ENCODE measurements at regions of chr2 and their contacts with region 1.

Region 1: GRCh38 chr2:84495539-84496146 is 20.7 kb upstream of the DNAH6 start:
- DNase-seq: peak in 7 of 9 donors; percentile 61 to 81 (median 73)
- ATAC-seq: peak; percentile 96
- H3K4me3 ChIP-seq: no peak overlapping the region
- H3K4me3 Mint-ChIP-seq: peak overlapping the region in 1 of 10 donors; percentile 23
- H3K27ac ChIP-seq: no peak overlapping the region
- H3K27ac Mint-ChIP-seq: peak overlapping the region in 7 of 9 donors; percentile 35 to 82 (median 76)
- H3K4me1 ChIP-seq: peaks cover 0 to 5% of the 10 kb centered on the region in 2 donors
- H3K4me1 Mint-ChIP-seq: peaks cover 9 to 31% (median 28%) of the 10 kb centered on the region in 7 donors
- H3K27me3 ChIP-seq: no peaks in the 10 kb centered on the region
- H3K27me3 Mint-ChIP-seq: peaks cover 0 to 14% (median 0%) of the 10 kb centered on the region in 5 donors

Region 2: GRCh38 chr2:84526562-84526961 is 30.9 kb after region 1 on chr2:
- CTCF ChIA-PET with region 1: interaction called, 3 read pairs
- POLR2A ChIA-PET with region 1: interaction called, 4 read pairs
- intact Hi-C with region 1: loop called in 1 of 2 experiments (anchors 1 kb)
- DNase-seq: peak in 3 of 9 donors; percentile 32 to 45 (median 35)
- ATAC-seq: no peak
- H3K4me3 ChIP-seq: no peak overlapping the region
- H3K4me3 Mint-ChIP-seq: peak overlapping the region in 6 of 10 donors; percentile 17 to 46 (median 30)
- H3K27ac ChIP-seq: no peak overlapping the region
- H3K27ac Mint-ChIP-seq: peak overlapping the region in 8 of 9 donors; percentile 0 to 82 (median 53)
- H3K4me1 ChIP-seq: peaks cover 0 to 9% of the 10 kb centered on the region in 2 donors
- H3K4me1 Mint-ChIP-seq: peaks cover 2 to 36% (median 28%) of the 10 kb centered on the region in 7 donors
- H3K27me3 ChIP-seq: no peaks in the 10 kb centered on the region
- H3K27me3 Mint-ChIP-seq: peaks cover 0 to 16% (median 0%) of the 10 kb centered on the region in 5 donors

Region 3: DNA sequence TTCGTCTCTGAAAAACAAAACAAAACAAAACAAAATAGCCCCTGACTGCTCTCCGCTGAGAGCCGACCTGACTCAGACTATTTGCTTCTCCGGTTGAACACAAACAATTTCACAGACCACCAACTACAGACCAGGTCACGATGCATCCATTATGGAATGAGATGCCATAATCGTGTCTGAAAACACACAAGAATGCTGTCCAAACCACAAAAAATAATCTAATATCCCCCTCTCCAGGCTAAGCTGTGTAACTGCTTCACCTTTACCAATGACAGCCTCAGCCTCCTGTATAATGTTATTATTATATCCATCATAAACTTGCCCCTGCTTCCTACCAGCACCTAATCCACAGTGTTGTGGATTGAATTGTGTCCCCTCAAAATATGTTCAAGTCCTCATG is 135.4 kb after region 1 on chr2:
- CTCF ChIA-PET with region 1: interaction called, 3 read pairs
- POLR2A ChIA-PET with region 1: no interaction called
- intact Hi-C with region 1: loop called (anchors 1 kb)
- DNase-seq: peak in 6 of 9 donors; percentile 21 to 57 (median 50)
- ATAC-seq: peak; percentile 69
- H3K4me3 ChIP-seq: no peak overlapping the region
- H3K4me3 Mint-ChIP-seq: peak overlapping the region in 4 of 10 donors; percentile 5 to 60 (median 34)
- H3K27ac ChIP-seq: no peak overlapping the region
- H3K27ac Mint-ChIP-seq: peak overlapping the region in 5 of 9 donors; percentile 12 to 80 (median 33)
- H3K4me1 ChIP-seq: peaks cover 0 to 15% of the 10 kb centered on the region in 2 donors
- H3K4me1 Mint-ChIP-seq: peaks cover 16 to 56% (median 52%) of the 10 kb centered on the region in 7 donors
- H3K27me3 ChIP-seq: no peaks in the 10 kb centered on the region
- H3K27me3 Mint-ChIP-seq: peaks cover 0 to 2% (median 0%) of the 10 kb centered on the region in 5 donors

Region 4: GRCh38 chr2:84741296-84741765 is 245.7 kb after region 1 on chr2:
- CTCF ChIA-PET with region 1: no interaction called
- POLR2A ChIA-PET with region 1: no interaction called
- intact Hi-C with region 1: loop called in 1 of 2 experiments (anchors 2 kb)
- DNase-seq: peak in 8 of 9 donors; percentile 14 to 43 (median 28)
- ATAC-seq: peak; percentile 94
- H3K4me3 ChIP-seq: no peak overlapping the region
- H3K4me3 Mint-ChIP-seq: peak overlapping the region in 4 of 10 donors; percentile 5 to 30 (median 23)
- H3K27ac ChIP-seq: no peak overlapping the region
- H3K27ac Mint-ChIP-seq: peak overlapping the region in 6 of 9 donors; percentile 7 to 71 (median 38)
- H3K4me1 ChIP-seq: peaks cover 14 to 17% of the 10 kb centered on the region in 2 donors
- H3K4me1 Mint-ChIP-seq: peaks cover 12 to 75% (median 51%) of the 10 kb centered on the region in 7 donors
- H3K27me3 ChIP-seq: no peaks in the 10 kb centered on the region
- H3K27me3 Mint-ChIP-seq: peaks cover 0 to 21% (median 0%) of the 10 kb centered on the region in 5 donors

Region 5: DNA sequence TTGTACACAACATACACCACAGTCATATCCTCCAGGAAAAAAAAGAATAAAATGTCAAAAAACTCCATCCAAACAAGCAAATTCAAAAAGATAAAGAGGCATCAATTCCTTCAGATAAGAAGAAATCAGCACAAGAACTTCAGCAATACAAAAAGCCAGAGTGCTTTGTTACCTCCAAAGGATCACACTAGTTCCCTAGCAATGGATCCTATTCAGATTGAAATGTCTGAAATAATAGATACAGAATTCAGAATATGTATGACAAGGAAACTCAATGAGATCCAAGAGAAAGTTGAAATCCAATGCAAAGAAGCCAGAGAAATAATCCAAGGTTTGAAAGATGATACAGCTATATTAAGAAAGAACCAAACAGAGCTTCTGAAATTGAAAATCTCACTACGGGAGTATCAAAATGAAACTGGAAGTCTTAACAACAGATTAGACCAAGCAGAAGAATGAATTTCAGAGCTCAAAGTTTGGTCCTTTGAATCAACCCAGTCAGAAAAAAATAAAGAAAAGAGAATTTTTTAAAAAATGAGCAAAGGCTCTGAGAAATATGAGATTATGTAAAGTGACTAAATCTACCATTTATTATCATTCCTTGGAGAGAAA is 304.7 kb after region 1 on chr2:
- CTCF ChIA-PET with region 1: no interaction called
- POLR2A ChIA-PET with region 1: no interaction called
- intact Hi-C with region 1: no loop called
- DNase-seq: no peak
- ATAC-seq: no peak
- H3K4me3 ChIP-seq: peak overlapping the region; percentile 25
- H3K4me3 Mint-ChIP-seq: peak overlapping the region in 9 of 10 donors; percentile 42 to 79 (median 62)
- H3K27ac ChIP-seq: no peak overlapping the region
- H3K27ac Mint-ChIP-seq: peak overlapping the region; percentile 3 to 83 (median 65)
- H3K4me1 ChIP-seq: peaks cover 6 to 12% of the 10 kb centered on the region in 2 donors
- H3K4me1 Mint-ChIP-seq: peaks cover 13 to 60% (median 43%) of the 10 kb centered on the region in 7 donors
- H3K27me3 ChIP-seq: no peaks in the 10 kb centered on the region
- H3K27me3 Mint-ChIP-seq: no peaks in the 10 kb centered on the region

Region 6: GRCh38 chr2:84856787-84857186 is 361.1 kb after region 1 on chr2:
- CTCF ChIA-PET with region 1: interaction called, 5 read pairs
- POLR2A ChIA-PET with region 1: interaction called, 3 read pairs
- intact Hi-C with region 1: loop called in 1 of 2 experiments (anchors 2 kb)
- DNase-seq: peak in 2 of 9 donors; percentile 31 to 49
- ATAC-seq: peak; percentile 73
- H3K4me3 ChIP-seq: no peak overlapping the region
- H3K4me3 Mint-ChIP-seq: peak overlapping the region; percentile 54 to 89 (median 85)
- H3K27ac ChIP-seq: peak overlapping the region; percentile 72
- H3K27ac Mint-ChIP-seq: peak overlapping the region; percentile 85 to 99 (median 96)
- H3K4me1 ChIP-seq: peaks cover 53 to 95% of the 10 kb centered on the region in 2 donors
- H3K4me1 Mint-ChIP-seq: peaks cover 72 to 98% (median 96%) of the 10 kb centered on the region in 7 donors
- H3K27me3 ChIP-seq: no peaks in the 10 kb centered on the region
- H3K27me3 Mint-ChIP-seq: no peaks in the 10 kb centered on the region

Region 7: DNA sequence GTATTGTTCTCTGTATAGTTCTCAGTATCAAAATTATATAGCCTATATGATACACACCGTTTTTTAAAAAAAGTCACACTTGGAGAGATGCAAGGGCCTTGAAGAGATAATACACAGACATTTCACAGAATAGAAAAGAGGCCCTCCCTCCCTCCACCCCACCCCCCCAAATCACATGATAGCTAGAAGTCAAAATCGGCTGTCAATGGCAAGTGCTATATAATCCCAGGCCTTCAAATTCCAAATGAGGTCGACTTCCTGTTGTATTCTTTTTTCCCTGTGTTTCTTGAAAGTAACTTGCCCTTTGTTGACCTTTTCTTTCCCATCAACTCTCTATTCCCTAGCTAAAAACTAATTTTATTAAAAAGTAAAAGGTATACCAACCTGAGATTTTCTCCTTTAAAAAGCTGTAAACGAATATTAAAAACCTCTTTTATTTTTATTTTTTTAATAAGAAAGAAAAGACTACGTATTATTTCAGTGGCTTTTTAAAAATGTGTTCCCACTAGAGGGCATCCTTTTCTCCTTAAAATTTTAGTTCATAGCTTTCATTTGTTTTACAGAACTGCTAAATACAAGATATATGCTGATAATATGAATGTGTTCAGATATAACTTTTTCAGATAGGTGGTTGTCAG is 521.9 kb after region 1 on chr2:
- CTCF ChIA-PET with region 1: interaction called, 3 read pairs
- POLR2A ChIA-PET with region 1: no interaction called
- intact Hi-C with region 1: loop called in 1 of 2 experiments (anchors 1 kb)
- DNase-seq: peak in 4 of 9 donors; percentile 17 to 30 (median 24)
- ATAC-seq: no peak
- H3K4me3 ChIP-seq: no peak overlapping the region
- H3K4me3 Mint-ChIP-seq: peak overlapping the region in 4 of 10 donors; percentile 5 to 39 (median 32)
- H3K27ac ChIP-seq: no peak overlapping the region
- H3K27ac Mint-ChIP-seq: peak overlapping the region in 8 of 9 donors; percentile 8 to 67 (median 38)
- H3K4me1 ChIP-seq: peaks cover 2 to 15% of the 10 kb centered on the region in 2 donors
- H3K4me1 Mint-ChIP-seq: peaks cover 41 to 78% (median 66%) of the 10 kb centered on the region in 7 donors
- H3K27me3 ChIP-seq: no peaks in the 10 kb centered on the region
- H3K27me3 Mint-ChIP-seq: no peaks in the 10 kb centered on the region

Region 8: DNA sequence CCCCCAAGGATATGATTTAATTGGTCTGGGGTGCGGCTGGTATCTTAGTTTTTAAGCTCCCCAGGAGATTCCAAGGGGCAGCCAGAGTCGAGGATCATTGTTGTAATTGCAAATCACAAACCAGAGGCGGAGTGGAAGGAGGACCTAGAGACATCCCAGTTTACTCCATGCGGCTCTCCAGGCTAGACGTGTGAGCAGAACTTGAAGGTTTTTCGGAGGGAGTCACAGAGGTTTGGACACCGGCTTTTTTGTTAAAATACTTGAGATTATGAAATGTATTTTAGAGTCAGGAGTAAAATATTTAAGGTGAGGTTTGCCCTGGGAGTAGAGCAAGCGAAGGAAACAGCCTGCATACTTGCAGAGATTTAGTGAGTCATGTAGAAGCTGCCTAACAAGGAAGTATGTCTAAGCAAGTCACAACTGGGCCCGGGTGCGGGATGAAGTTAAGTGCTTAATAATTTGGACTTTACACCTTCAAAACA is 792.6 kb after region 1 on chr2:
- CTCF ChIA-PET with region 1: interaction called, 4 read pairs
- POLR2A ChIA-PET with region 1: no interaction called
- intact Hi-C with region 1: loop called (anchors 1 to 5 kb)
- DNase-seq: no peak
- ATAC-seq: no peak
- H3K4me3 ChIP-seq: no peak overlapping the region
- H3K4me3 Mint-ChIP-seq: no peak overlapping the region
- H3K27ac ChIP-seq: no peak overlapping the region
- H3K27ac Mint-ChIP-seq: no peak overlapping the region
- H3K4me1 ChIP-seq: peaks cover 5 to 9% of the 10 kb centered on the region in 2 donors
- H3K4me1 Mint-ChIP-seq: peaks cover 14 to 31% (median 25%) of the 10 kb centered on the region in 7 donors
- H3K27me3 ChIP-seq: no peaks in the 10 kb centered on the region
- H3K27me3 Mint-ChIP-seq: no peaks in the 10 kb centered on the region